H1 (cell line): ENCODE measurements at regions of chr5 and their contacts with region 1.

Region 1: GRCh38 chr5:132180134-132180745 is 47.4 kb downstream of the P4HA2 start:
- DNase-seq: no peak
- H3K4me3 ChIP-seq: no peak overlapping the region
- H3K27ac ChIP-seq: no peak overlapping the region
- H3K4me1 ChIP-seq: peaks cover 0 to 7% (median 4%) of the 10 kb centered on the region in 4 experiments; a peak in 6 of 7 replicates
- H3K27me3 ChIP-seq: no peaks in the 10 kb centered on the region; a peak in 2 of 7 replicates
- CTCF ChIP-seq: peak in 2 of 3 experiments; percentile 73 to 76; a peak in 3 of 4 replicates
- EP300 ChIP-seq: no peak
- POLR2A ChIP-seq: no peak
- RAD21 ChIP-seq: peak; percentile 69 to 79

Region 2: DNA sequence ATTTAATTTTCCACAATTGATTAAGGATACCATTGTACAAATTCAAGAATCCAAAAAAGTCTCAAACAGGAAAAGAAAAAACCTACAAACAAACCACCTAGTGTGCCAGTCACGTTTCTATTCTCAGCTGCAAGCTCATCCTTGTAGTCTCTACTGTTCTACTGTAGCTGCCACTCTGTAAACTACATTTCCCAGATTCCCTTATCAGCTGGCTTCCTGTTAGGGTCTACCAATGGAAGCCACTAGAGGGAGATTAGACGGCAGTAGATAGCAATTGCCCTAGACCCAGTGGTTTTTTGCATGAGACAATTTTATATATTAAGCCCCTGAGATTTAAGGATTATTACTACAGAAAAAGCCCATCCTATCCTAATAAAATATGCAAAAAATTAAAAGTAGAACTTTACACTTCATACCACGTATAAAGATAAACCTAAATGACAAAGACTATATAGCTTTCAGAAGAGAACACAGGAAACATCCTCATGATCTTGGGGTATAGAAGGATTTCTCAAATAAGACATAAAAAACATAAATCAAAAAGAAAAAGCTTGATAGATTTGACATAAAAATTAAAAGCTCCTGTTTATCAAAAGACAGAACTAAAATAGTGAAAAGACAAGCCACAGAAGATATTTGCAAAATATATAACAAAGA is 10.0 kb after region 1 on chr5:
- CTCF ChIA-PET with region 1: interaction called, 39 read pairs
- POLR2A ChIA-PET with region 1: no interaction called
- DNase-seq: no peak
- H3K4me3 ChIP-seq: no peak overlapping the region
- H3K27ac ChIP-seq: no peak overlapping the region
- H3K4me1 ChIP-seq: no peaks in the 10 kb centered on the region
- H3K27me3 ChIP-seq: no peaks in the 10 kb centered on the region
- CTCF ChIP-seq: peak in 2 of 3 experiments; percentile 77 to 90; a peak in 3 of 4 replicates
- EP300 ChIP-seq: no peak
- POLR2A ChIP-seq: no peak
- RAD21 ChIP-seq: peak; percentile 55 to 65

Region 3: GRCh38 chr5:132205385-132206125 is 25.3 kb after region 1 on chr5:
- CTCF ChIA-PET with region 1: interaction called, 10 read pairs
- POLR2A ChIA-PET with region 1: no interaction called
- DNase-seq: no peak
- H3K4me3 ChIP-seq: no peak overlapping the region
- H3K27ac ChIP-seq: no peak overlapping the region
- H3K4me1 ChIP-seq: peaks cover 0 to 5% (median 2%) of the 10 kb centered on the region in 4 experiments; a peak in 3 of 7 replicates
- H3K27me3 ChIP-seq: no peaks in the 10 kb centered on the region
- CTCF ChIP-seq: no peak
- EP300 ChIP-seq: no peak
- POLR2A ChIP-seq: no peak
- RAD21 ChIP-seq: no peak

Region 4: GRCh38 chr5:132227485-132228240 is 47.4 kb after region 1 on chr5 and contains the start of gene P4HA2:
- CTCF ChIA-PET with region 1: interaction called, 12 read pairs
- POLR2A ChIA-PET with region 1: no interaction called
- DNase-seq: peak; percentile 46 to 86
- H3K4me3 ChIP-seq: peak within 1 kb of the TSS; percentile 57 to 77 (median 60)
- H3K27ac ChIP-seq: no peak within 1 kb of the TSS; the same call in 1 of the 2 replicates
- H3K4me1 ChIP-seq: peaks cover 0 to 7% (median 5%) of the 10 kb centered on the region in 4 experiments; a peak in 4 of 7 replicates
- H3K27me3 ChIP-seq: peaks cover 3 to 22% (median 20%) of the 10 kb centered on the region in 4 experiments
- CTCF ChIP-seq: no peak
- EP300 ChIP-seq: no peak
- POLR2A ChIP-seq: peak in 1 of 2 experiments; percentile 54; a peak in 1 of 3 replicates
- RAD21 ChIP-seq: no peak; a peak in 1 of 4 replicates
- total RNA-seq, gene P4HA2: 7.4 and 8.2 TPM in 2 replicates